WTC11 (cell line): ENCODE measurements at regions of chr20 and their contacts with region 1.

Region 1: DNA sequence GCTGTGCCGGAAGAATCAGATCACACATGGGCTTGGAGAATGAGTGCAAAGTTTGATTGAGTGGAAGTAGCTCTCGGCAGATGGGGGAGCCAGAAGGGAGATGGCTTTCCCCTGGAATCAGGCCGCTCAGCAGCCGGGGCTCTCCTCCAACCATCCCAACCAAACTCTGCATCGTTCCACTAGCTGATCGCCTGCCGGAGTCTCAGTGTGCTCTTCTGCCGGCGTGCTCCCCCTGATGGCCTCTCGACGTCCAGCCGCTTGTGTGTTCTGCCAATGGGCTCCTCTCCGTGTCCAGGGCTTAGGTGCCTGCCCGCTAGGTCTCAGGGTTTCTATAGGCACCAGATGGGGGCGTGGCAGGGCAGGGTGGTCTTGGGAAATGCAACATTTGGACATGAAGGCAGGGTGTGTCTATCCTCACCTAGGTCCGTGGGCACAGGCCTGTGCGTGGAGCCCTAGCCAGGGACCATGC is 4.9 kb upstream of the BIRC7 start:
- DNase-seq: peak; percentile 80
- ATAC-seq: peak; percentile 75
- H3K4me3 Mint-ChIP-seq: no peak overlapping the region; the same call in 1 of the 2 replicates
- H3K27ac Mint-ChIP-seq: 0 out of 2 replicates have a peak overlapping the region, but pooled peaks have one; percentile 6
- H3K4me1 Mint-ChIP-seq: peaks cover 34% of the 10 kb centered on the region
- H3K27me3 Mint-ChIP-seq: peaks cover 11% of the 10 kb centered on the region
- CTCF ChIP-seq: no peak

Region 2: DNA sequence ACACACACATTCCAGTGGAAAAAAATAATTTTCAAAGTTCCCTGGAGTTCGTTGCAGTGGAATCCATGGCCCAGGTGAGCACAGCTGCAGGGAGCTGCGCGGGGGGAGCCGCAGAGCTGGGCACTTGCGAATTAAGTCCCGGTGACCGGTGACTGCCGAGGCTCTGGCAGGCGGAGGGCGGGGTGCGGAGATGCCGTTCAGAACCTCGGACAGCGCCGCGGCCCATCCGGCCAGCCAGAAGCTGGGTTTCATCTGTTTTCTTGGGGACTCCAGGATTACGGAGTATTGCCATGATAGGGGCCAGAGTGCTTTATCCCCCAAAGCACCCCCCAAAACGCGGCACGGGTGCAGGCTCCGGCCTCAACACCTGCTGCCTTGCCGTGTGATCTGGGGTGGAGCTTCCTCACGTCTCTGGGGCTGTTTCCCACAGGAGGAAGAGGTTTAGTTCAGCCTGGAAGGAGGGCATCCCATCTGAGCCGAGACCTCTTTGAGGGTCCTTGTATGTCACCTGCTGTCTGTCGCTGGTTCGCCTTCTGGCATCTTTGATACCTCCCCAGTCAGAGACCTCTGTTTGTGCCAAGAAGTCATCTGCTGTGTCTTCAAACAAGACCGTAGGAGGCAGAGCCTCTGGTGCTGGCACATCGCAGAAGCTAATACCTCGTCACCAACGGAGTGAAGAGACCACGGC is 114.3 kb before region 1 on chr20:
- CTCF ChIA-PET with region 1: no interaction called
- POLR2A ChIA-PET with region 1: no interaction called
- DNase-seq: peak; percentile 76
- ATAC-seq: peak; percentile 76
- H3K4me3 Mint-ChIP-seq: no peak overlapping the region
- H3K27ac Mint-ChIP-seq: no peak overlapping the region
- H3K4me1 Mint-ChIP-seq: no peaks in the 10 kb centered on the region
- H3K27me3 Mint-ChIP-seq: peaks cover 29% of the 10 kb centered on the region
- CTCF ChIP-seq: no peak

Region 3: DNA sequence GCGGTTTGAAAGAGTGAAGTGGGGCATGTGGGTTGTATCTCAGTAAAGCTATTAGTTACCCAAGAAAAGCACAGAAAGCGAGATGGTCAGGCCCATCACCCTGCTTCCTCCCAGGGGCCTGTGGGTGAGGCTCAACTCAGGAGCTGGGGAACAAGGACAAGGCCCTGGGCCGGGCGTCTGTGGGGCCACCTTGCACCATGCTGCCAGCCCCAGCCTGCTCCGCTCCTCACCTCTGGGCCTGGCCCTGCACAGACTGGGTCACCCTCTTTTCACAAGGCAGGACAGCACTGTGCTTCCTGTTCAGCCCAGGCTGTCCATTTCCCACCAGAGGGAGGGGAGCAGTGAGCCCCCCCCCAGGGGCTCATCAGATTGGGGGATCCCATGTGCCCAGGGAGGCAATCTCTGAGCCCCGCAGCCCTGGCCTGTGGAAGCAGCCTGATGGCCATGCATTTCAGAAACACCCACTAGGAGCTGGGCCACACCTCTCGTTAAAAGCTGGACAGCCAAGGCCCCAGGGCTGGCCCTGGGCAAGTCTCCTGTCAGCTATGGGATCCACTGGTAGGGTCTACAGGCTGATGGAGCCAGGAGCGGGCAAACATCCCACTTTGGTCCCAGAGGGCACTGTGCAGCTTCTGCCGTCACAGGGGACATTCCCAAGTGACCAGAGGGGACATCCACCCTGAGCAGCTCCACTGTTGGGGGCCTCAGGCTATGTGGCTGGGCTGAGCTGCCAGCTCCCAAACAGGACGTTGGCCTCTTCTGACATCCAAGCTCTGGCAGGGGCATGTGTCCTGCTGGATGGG is 70.8 kb before region 1 on chr20:
- CTCF ChIA-PET with region 1: no interaction called
- POLR2A ChIA-PET with region 1: no interaction called
- DNase-seq: no peak
- ATAC-seq: no peak
- H3K4me3 Mint-ChIP-seq: no peak overlapping the region
- H3K27ac Mint-ChIP-seq: no peak overlapping the region
- H3K4me1 Mint-ChIP-seq: no peaks in the 10 kb centered on the region
- H3K27me3 Mint-ChIP-seq: no peaks in the 10 kb centered on the region
- CTCF ChIP-seq: no peak

Region 4: GRCh38 chr20:63178889-63179686 is 51.7 kb before region 1 on chr20:
- CTCF ChIA-PET with region 1: interaction called, 15 read pairs
- POLR2A ChIA-PET with region 1: no interaction called
- DNase-seq: peak; percentile 57
- ATAC-seq: peak; percentile 1; the same call in 1 of the 2 replicates
- H3K4me3 Mint-ChIP-seq: peak overlapping the region; percentile 65
- H3K27ac Mint-ChIP-seq: no peak overlapping the region
- H3K4me1 Mint-ChIP-seq: peaks cover 10% of the 10 kb centered on the region
- H3K27me3 Mint-ChIP-seq: peaks cover 47% of the 10 kb centered on the region
- CTCF ChIP-seq: no peak

Region 5: GRCh38 chr20:63216041-63216848 is 14.6 kb before region 1 on chr20 and contains the start of gene YTHDF1:
- CTCF ChIA-PET with region 1: interaction called, 12 read pairs
- POLR2A ChIA-PET with region 1: no interaction called
- DNase-seq: peak; percentile 93
- ATAC-seq: peak; percentile 85
- H3K4me3 Mint-ChIP-seq: peak within 1 kb of the TSS; percentile 96
- H3K27ac Mint-ChIP-seq: peak within 1 kb of the TSS; percentile 93
- H3K4me1 Mint-ChIP-seq: peaks cover 28% of the 10 kb centered on the region
- H3K27me3 Mint-ChIP-seq: peaks cover 4% of the 10 kb centered on the region; the same call in 1 of the 2 replicates
- CTCF ChIP-seq: no peak
- total RNA-seq, gene YTHDF1: 50.2 to 61.3 TPM (median 51.3 TPM) in 3 replicates

Region 6: DNA sequence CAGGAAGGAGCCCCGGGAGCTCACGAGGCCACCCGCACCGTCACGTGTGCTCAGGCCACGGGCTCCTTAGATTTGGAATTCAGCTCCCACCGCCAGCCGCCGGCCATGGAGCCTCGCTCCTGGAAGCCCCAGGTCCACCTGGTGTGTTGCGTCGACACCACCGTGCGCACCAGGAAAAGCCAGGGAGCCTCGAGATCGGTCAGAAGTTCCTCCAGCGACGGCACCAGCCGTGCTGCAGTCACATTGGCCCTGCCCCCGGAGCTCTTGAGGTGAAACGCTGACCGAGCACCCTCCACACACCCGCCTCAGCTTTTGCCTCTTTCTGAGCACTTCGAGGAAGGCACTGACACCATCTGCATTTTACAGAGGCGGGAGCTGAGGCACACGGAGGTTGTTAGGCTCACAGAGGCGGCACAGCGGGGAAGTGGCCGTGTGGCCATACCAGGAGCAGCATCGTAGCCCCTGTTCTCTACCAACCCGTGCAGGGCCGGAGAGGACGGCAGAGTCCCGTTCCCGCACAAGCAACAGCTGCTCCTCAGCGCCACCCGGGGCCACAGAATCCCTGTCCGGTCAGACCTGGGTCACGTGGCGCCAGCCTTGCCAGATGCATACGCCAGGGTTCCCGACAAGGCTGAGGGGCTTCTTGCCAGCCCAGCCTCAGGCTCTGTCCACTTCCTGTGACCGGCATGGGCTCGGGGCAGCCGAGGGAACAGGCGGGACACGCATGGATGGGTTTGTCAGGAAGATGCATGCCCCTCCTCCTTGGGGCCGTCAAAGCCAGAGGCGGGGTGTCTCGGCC is 15.9 kb after region 1 on chr20:
- CTCF ChIA-PET with region 1: interaction called, 93 read pairs
- POLR2A ChIA-PET with region 1: interaction called, 5 read pairs
- DNase-seq: peak; percentile 54
- ATAC-seq: peak; percentile 71
- H3K4me3 Mint-ChIP-seq: no peak overlapping the region
- H3K27ac Mint-ChIP-seq: no peak overlapping the region
- H3K4me1 Mint-ChIP-seq: peaks cover 3% of the 10 kb centered on the region
- H3K27me3 Mint-ChIP-seq: peaks cover 7% of the 10 kb centered on the region; the same call in 1 of the 2 replicates
- CTCF ChIP-seq: no peak

Region 7: GRCh38 chr20:63253438-63254236 is 22.8 kb after region 1 on chr20:
- CTCF ChIA-PET with region 1: interaction called, 93 read pairs
- POLR2A ChIA-PET with region 1: interaction called, 5 read pairs
- DNase-seq: peak; percentile 79
- ATAC-seq: peak; percentile 47
- H3K4me3 Mint-ChIP-seq: peak overlapping the region; percentile 62
- H3K27ac Mint-ChIP-seq: no peak overlapping the region
- H3K4me1 Mint-ChIP-seq: peaks cover 23% of the 10 kb centered on the region
- H3K27me3 Mint-ChIP-seq: peaks cover 51% of the 10 kb centered on the region
- CTCF ChIP-seq: no peak

Region 8: GRCh38 chr20:63280929-63281545 is 50.2 kb after region 1 on chr20:
- CTCF ChIA-PET with region 1: interaction called, 16 read pairs
- POLR2A ChIA-PET with region 1: no interaction called
- DNase-seq: peak; percentile 67
- ATAC-seq: peak; percentile 91
- H3K4me3 Mint-ChIP-seq: no peak overlapping the region
- H3K27ac Mint-ChIP-seq: no peak overlapping the region; the same call in 1 of the 2 replicates
- H3K4me1 Mint-ChIP-seq: no peaks in the 10 kb centered on the region
- H3K27me3 Mint-ChIP-seq: no peaks in the 10 kb centered on the region
- CTCF ChIP-seq: 0 out of 2 replicates have a peak, but pooled peaks have one; percentile 39

Region 9: GRCh38 chr20:63316502-63316921 is 85.7 kb after region 1 on chr20:
- CTCF ChIA-PET with region 1: no interaction called
- POLR2A ChIA-PET with region 1: no interaction called
- DNase-seq: no peak
- ATAC-seq: no peak
- H3K4me3 Mint-ChIP-seq: no peak overlapping the region
- H3K27ac Mint-ChIP-seq: no peak overlapping the region
- H3K4me1 Mint-ChIP-seq: no peaks in the 10 kb centered on the region
- H3K27me3 Mint-ChIP-seq: no peaks in the 10 kb centered on the region
- CTCF ChIP-seq: no peak

Region 10: DNA sequence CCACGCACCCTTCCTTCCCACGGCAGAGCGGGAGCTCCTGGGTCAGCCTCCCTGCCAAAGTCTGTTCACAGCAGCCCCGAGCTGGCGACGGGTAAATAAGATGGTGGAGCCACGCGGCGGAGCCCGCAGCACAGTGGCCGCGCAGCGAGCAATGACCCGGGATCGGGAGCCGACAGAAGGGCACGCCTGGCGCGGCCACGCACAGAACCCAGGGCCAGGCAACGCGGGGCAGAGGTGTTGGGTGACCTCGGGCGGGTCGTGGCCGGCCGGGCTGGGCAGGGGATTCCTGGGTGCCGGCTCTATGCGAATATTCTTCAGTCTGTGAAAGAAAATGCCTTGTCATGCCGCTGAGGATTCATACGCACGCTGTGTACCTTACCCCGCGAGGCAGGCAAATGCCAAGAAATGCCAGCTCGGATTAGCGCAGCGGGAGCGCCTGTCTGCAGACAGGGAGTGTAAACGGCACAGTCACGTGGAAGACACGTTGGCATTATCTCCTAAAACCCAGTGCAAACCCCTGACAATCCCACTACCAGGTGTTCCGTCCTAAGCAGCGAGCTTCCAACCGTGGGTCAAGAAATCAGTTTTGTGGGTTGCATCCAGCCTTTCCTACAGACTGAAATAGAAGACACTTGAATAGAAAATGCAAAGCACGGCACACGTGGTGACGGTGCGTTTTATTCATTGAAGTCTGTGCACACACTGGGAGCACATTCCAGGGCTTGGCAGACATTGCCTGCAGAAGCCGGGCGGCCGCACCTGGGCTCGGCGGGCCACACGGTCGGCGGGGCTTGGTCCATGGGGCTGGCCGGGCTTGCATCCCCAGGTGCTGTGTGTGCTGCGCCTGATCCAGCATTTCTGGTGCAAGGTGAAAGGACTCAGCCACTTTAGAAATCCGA is 112.0 kb after region 1 on chr20:
- CTCF ChIA-PET with region 1: no interaction called
- POLR2A ChIA-PET with region 1: no interaction called
- DNase-seq: no peak
- ATAC-seq: no peak
- H3K4me3 Mint-ChIP-seq: no peak overlapping the region
- H3K27ac Mint-ChIP-seq: no peak overlapping the region
- H3K4me1 Mint-ChIP-seq: no peaks in the 10 kb centered on the region
- H3K27me3 Mint-ChIP-seq: peaks cover 2% of the 10 kb centered on the region; the same call in 1 of the 2 replicates
- CTCF ChIP-seq: no peak